Ovary (tissue), 10 donors: ENCODE measurements at regions of chr3 and their contacts with region 1.

Region 1: GRCh38 chr3:188052169-188053030 is 101.6 kb upstream of the LPP start:
- DNase-seq: peak; percentile 93 to 95 (median 94)
- H3K4me3 ChIP-seq: peak overlapping the region; percentile 13
- H3K27ac ChIP-seq: peak overlapping the region; percentile 53 to 85
- H3K4me1 ChIP-seq: peaks cover 15% of the 10 kb centered on the region
- H3K27me3 ChIP-seq: no peaks in the 10 kb centered on the region
- CTCF ChIP-seq: peak; percentile 71 to 85 (median 85)
- EP300 ChIP-seq: no peak
- POLR2A ChIP-seq: no peak

Region 2: GRCh38 chr3:187788984-187789857 is 263.2 kb before region 1 on chr3:
- intact Hi-C with region 1: no loop called
- DNase-seq: no peak
- H3K4me3 ChIP-seq: no peak overlapping the region
- H3K27ac ChIP-seq: no peak overlapping the region
- H3K4me1 ChIP-seq: no peaks in the 10 kb centered on the region
- H3K27me3 ChIP-seq: no peaks in the 10 kb centered on the region
- CTCF ChIP-seq: no peak
- EP300 ChIP-seq: no peak
- POLR2A ChIP-seq: no peak

Region 3: GRCh38 chr3:188154014-188154808 is 101.8 kb after region 1 on chr3 and contains the start of gene LPP:
- intact Hi-C with region 1: loop called in 1 of 4 experiments (anchors 5 kb)
- DNase-seq: peak; percentile 59 to 84 (median 77)
- H3K4me3 ChIP-seq: peak within 1 kb of the TSS; percentile 70
- H3K27ac ChIP-seq: peak within 1 kb of the TSS; percentile 81 to 91
- H3K4me1 ChIP-seq: peaks cover 10% of the 10 kb centered on the region
- H3K27me3 ChIP-seq: no peaks in the 10 kb centered on the region
- CTCF ChIP-seq: peak in 1 of 3 donors; percentile 5
- EP300 ChIP-seq: no peak
- POLR2A ChIP-seq: no peak
- total RNA-seq, gene LPP: 80.6 to 280 (median 165) TPM

Region 4: DNA sequence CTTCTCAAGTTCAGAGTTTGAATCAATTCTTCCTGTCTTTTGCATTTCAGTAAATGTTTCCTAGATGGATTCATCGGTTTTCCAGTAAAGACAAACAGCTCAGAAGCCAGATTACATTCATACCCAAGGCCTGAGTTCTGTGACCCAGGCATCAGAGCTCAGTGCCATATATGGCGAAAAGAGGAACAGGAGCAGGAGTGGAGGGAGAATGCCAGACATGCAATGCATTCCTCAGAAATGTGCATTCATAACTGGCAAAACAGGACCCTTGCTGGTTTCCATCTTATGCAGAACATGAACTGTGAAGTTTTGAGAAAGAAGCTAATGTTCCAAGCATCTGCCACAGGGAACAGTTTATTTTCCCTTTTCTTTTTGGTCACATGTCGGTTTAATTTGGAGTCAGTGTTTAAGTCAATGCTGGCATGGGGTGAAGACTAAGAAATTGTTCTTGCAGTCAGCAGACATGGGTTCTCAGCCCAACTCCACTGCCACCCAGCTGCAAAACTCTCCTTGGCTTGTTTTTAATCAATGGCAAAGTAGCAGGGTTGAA is 218.1 kb after region 1 on chr3:
- intact Hi-C with region 1: loop called in 2 of 4 experiments (anchors 5 to 10 kb)
- DNase-seq: no peak
- H3K4me3 ChIP-seq: no peak overlapping the region
- H3K27ac ChIP-seq: peak overlapping the region; percentile 0 to 4
- H3K4me1 ChIP-seq: peaks cover 17% of the 10 kb centered on the region
- H3K27me3 ChIP-seq: no peaks in the 10 kb centered on the region
- CTCF ChIP-seq: no peak
- EP300 ChIP-seq: peak; percentile 81
- POLR2A ChIP-seq: no peak

Region 5: GRCh38 chr3:188954590-188955208 is 902.3 kb after region 1 on chr3:
- intact Hi-C with region 1: loop called (anchors 5 kb)
- DNase-seq: peak; percentile 85 to 92 (median 87)
- H3K4me3 ChIP-seq: no peak overlapping the region
- H3K27ac ChIP-seq: no peak overlapping the region
- H3K4me1 ChIP-seq: peaks cover 8% of the 10 kb centered on the region
- H3K27me3 ChIP-seq: no peaks in the 10 kb centered on the region
- CTCF ChIP-seq: peak; percentile 73 to 96 (median 90)
- EP300 ChIP-seq: no peak
- POLR2A ChIP-seq: no peak